ENCODE measurements at regions of chr12 and their contacts with region 1.

Region 1: DNA sequence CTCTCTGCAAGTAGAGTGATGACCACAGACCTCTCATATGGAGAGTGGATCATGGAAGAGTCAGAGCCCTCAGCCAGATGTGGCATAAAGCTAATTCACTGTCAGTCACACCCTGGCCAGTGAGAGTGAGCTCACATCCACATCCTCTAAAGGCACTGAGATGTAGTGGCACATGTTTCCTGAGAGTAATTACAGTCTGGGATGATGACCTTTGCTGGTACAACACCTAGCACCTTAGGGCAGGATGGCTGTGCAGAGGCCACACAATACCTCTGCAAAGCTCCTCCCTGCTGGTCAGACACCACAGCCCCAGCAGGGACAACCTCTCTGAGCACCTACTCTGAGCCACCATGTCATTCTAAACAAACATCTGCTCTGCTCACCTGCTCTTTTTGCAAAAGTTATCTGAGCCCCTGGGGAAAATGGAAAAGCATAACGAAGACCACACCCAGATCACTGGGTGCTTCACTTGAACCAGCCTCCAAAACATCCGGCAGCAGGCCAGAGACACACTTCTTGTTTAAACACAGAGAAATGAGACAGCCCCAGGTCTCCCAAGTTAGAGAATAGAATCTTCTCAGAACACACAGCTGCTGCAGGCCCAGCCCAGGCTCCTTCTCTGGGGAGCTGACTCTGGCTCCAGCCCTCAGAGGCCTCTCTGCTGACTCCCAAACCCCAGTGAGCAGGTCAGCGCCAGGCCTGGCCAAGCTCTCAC is 30.3 kb downstream of the PITPNM2 start:
- DNase-seq: peak; percentile 54
- ATAC-seq: peak; percentile 61
- H3K4me3 Mint-ChIP-seq: peak overlapping the region; percentile 26
- H3K27ac Mint-ChIP-seq: peak overlapping the region; percentile 93
- H3K4me1 Mint-ChIP-seq: peaks cover 47% of the 10 kb centered on the region
- H3K27me3 Mint-ChIP-seq: no peaks in the 10 kb centered on the region

Region 2: GRCh38 chr12:123095075-123096004 is 25.3 kb before region 1 on chr12:
- CTCF ChIA-PET with region 1: no interaction called
- POLR2A ChIA-PET with region 1: no interaction called
- DNase-seq: no peak
- ATAC-seq: no peak
- H3K4me3 Mint-ChIP-seq: no peak overlapping the region
- H3K27ac Mint-ChIP-seq: no peak overlapping the region
- H3K4me1 Mint-ChIP-seq: peaks cover 11% of the 10 kb centered on the region
- H3K27me3 Mint-ChIP-seq: no peaks in the 10 kb centered on the region

Region 3: GRCh38 chr12:123131879-123132452 is 11.4 kb after region 1 on chr12:
- CTCF ChIA-PET with region 1: interaction called, 11 read pairs
- POLR2A ChIA-PET with region 1: interaction called, 11 read pairs
- DNase-seq: peak; percentile 58
- ATAC-seq: peak; percentile 87
- H3K4me3 Mint-ChIP-seq: peak overlapping the region; percentile 55
- H3K27ac Mint-ChIP-seq: peak overlapping the region; percentile 89
- H3K4me1 Mint-ChIP-seq: peaks cover 33% of the 10 kb centered on the region
- H3K27me3 Mint-ChIP-seq: no peaks in the 10 kb centered on the region

Measured in activated CD8-positive, alpha-beta T cell treated with anti-CD3 and anti-CD28 coated beads, Interleukin-2, amount 10 ng/mL, durations not matched to agents 7 days and 5 days (primary cell).